ENCODE measurements at regions of chr10 and their contacts with region 1.

Region 1: GRCh38 chr10:17375936-17376584 is 78.3 kb downstream of the ST8SIA6 start:
- DNase-seq: peak; percentile 16
- H3K4me3 ChIP-seq: peak overlapping the region in 1 of 2 experiments; percentile 21; a peak in 1 of 4 replicates
- H3K27ac ChIP-seq: no peak overlapping the region
- H3K4me1 ChIP-seq: no peaks in the 10 kb centered on the region
- H3K27me3 ChIP-seq: no peaks in the 10 kb centered on the region
- CTCF ChIP-seq: peak; percentile 60
- EP300 ChIP-seq: no peak
- RAD21 ChIP-seq: no peak

Region 2: DNA sequence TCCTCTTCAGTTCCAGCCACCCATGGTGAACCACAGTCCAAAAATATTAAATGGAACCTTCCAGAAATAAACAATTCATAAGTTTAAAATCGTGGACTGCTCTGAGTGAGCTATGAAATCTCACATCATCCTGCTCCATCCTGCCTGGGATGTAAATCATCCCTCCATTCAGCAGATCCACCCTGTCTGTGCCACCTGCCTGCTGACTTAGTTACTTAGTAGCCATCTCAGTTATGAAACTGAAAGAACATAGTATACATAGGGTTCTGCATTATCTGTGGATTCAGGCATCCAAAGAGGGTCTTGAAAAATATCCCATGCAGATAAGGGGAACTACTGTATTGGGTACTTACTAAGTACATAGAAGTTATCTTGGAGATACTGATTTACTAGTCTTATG is 10.7 kb before region 1 on chr10:
- CTCF ChIA-PET with region 1: interaction called, 11 read pairs
- POLR2A ChIA-PET with region 1: no interaction called
- DNase-seq: no peak
- H3K4me3 ChIP-seq: no peak overlapping the region
- H3K27ac ChIP-seq: no peak overlapping the region
- H3K4me1 ChIP-seq: no peaks in the 10 kb centered on the region
- H3K27me3 ChIP-seq: no peaks in the 10 kb centered on the region
- CTCF ChIP-seq: no peak
- EP300 ChIP-seq: no peak
- RAD21 ChIP-seq: no peak

Region 3: DNA sequence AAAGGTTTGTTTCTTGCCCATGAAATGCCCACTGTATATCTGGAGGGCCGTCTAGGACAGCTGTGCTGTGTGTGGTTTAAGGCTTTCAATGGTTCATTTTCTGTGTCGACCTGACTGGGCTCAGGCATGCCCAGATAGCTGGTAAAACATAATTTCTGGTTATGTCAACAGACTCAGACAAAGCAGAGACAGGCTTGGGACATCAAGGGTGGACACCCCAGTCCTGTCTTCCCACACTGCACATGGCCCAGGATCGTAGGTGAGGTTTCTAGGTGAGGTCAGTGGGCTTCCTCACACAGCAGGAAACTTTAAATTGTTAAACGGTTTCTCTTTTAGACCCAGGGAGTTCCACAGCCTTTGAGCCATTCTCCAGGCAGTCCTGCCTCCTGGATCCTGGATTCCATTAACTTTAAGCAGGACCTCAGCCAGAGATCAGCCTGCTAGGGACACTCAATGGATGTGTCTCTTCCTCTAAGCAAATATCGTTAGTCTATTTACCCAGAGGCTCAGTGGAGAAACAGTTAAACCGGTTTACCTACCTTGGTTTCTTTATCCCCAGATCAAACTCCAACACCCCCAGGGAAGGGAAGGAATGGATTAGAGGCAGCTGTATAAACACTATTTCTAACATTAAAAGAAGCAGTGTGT is 11.9 kb after region 1 on chr10:
- CTCF ChIA-PET with region 1: interaction called, 12 read pairs
- POLR2A ChIA-PET with region 1: no interaction called
- DNase-seq: peak; percentile 27
- H3K4me3 ChIP-seq: no peak overlapping the region
- H3K27ac ChIP-seq: no peak overlapping the region
- H3K4me1 ChIP-seq: peaks cover 0 to 5% of the 10 kb centered on the region in 2 experiments; a peak in 1 of 4 replicates
- H3K27me3 ChIP-seq: no peaks in the 10 kb centered on the region
- CTCF ChIP-seq: no peak
- EP300 ChIP-seq: no peak
- RAD21 ChIP-seq: no peak

Measured in SK-N-SH (cell line).